GM12878 (cell line): ENCODE measurements at regions of chr17 and their contacts with region 1.

Region 1: GRCh38 chr17:75059369-75060345 is 12.6 kb downstream of the KCTD2 start:
- DNase-seq: no peak
- ATAC-seq: no peak
- H3K4me3 ChIP-seq: no peak overlapping the region
- H3K27ac ChIP-seq: no peak overlapping the region
- H3K4me1 ChIP-seq: no peaks in the 10 kb centered on the region
- H3K27me3 ChIP-seq: no peaks in the 10 kb centered on the region
- CTCF ChIP-seq: peak in 2 of 3 experiments; percentile 19 to 34; a peak in 2 of 6 replicates
- EP300 ChIP-seq: no peak
- POLR2A ChIP-seq: no peak
- RAD21 ChIP-seq: peak; percentile 38; the same call in 1 of the 2 replicates

Region 2: DNA sequence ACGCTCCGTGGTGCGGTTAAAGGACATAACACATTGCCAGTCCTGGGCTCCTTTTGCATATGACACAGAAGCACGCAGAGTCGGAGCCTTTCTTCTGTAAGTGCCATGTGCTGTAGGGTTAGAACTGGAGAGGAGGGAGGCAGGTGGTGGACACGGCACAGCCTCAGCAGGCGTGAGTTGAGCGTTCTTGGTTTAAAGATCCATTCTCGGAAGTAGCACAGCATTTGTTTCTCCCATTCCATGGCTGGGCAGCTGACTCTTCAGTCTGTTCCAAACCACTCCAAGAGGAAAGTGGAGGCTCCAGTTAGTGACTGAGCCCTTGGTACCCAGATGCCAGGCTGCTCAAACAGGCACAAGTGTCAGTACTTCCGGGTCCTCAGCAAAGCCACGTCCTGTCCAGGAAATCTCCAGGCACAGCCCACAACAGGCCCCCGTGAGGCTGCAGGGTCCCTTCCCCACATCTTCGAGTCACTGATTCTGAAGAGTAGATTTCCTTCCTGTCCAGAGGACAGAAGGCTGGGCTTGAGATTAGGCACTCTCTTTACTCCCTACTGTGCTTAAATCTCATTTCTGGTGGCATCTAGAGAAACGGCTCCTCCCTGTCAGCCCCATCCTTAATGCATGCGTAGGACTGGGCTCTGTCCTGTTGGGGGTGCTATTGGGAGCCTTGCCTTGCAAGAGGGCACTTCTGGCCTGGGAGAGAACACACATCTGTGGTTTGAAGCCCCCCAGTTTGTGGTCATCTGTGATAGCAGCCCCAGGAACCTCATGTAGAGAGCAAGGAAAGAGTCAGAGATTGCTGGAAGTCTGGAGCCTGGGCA is 243.9 kb before region 1 on chr17:
- CTCF ChIA-PET with region 1: no interaction called
- POLR2A ChIA-PET with region 1: no interaction called
- RAD21 ChIA-PET with region 1: no interaction called
- SMC1A ChIA-PET with region 1: no interaction called
- in situ Hi-C with region 1: no loop called
- intact Hi-C with region 1: no loop called
- DNase-seq: no peak
- ATAC-seq: peak; percentile 28; the same call in 1 of the 3 replicates
- H3K4me3 ChIP-seq: no peak overlapping the region
- H3K27ac ChIP-seq: no peak overlapping the region
- H3K4me1 ChIP-seq: no peaks in the 10 kb centered on the region
- H3K27me3 ChIP-seq: no peaks in the 10 kb centered on the region
- CTCF ChIP-seq: 0 out of 6 replicates have a peak, but pooled peaks of 2 of the 3 experiments have one; percentile 5 to 10
- EP300 ChIP-seq: no peak
- POLR2A ChIP-seq: no peak
- RAD21 ChIP-seq: no peak

Region 3: DNA sequence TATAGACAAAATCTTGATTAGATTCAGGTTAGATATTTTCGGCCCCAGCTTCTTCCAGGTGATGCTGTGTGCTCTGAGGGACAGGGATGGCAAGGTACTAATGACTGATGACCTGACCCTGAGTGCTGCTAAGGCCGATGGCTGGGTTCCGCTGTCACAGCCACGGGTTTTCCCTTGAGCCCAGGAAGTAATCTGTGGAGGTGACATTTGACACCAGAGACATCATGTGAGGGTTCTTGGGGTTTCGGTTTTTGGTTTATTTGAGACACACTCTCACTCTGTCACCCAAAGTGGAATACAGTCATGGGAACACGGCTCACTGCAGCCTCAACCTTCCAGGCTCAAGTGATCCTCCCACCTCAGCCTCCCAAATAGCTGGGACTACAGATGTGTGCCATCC is 114.1 kb before region 1 on chr17:
- CTCF ChIA-PET with region 1: no interaction called
- POLR2A ChIA-PET with region 1: no interaction called
- RAD21 ChIA-PET with region 1: no interaction called
- SMC1A ChIA-PET with region 1: no interaction called
- in situ Hi-C with region 1: no loop called
- intact Hi-C with region 1: no loop called
- DNase-seq: peak; percentile 48
- ATAC-seq: peak; percentile 97
- H3K4me3 ChIP-seq: peak overlapping the region; percentile 12; the same call in 1 of the 2 replicates
- H3K27ac ChIP-seq: no peak overlapping the region
- H3K4me1 ChIP-seq: peaks cover 6% of the 10 kb centered on the region; the same call in 1 of the 2 replicates
- H3K27me3 ChIP-seq: no peaks in the 10 kb centered on the region; a peak in 1 of 4 replicates
- CTCF ChIP-seq: no peak
- EP300 ChIP-seq: no peak
- POLR2A ChIP-seq: peak; percentile 52; the same call in 1 of the 2 replicates
- RAD21 ChIP-seq: no peak

Region 4: GRCh38 chr17:75012346-75013091 is 47.1 kb before region 1 on chr17 and contains the start of gene MRPL58:
- CTCF ChIA-PET with region 1: interaction called, 11 read pairs
- POLR2A ChIA-PET with region 1: interaction called, 3 read pairs
- RAD21 ChIA-PET with region 1: interaction called, 3 read pairs
- SMC1A ChIA-PET with region 1: interaction called, 4 read pairs
- in situ Hi-C with region 1: no loop called
- intact Hi-C with region 1: no loop called
- DNase-seq: peak; percentile 60
- ATAC-seq: peak; percentile 95
- H3K4me3 ChIP-seq: peak within 1 kb of the TSS; percentile 94
- H3K27ac ChIP-seq: peak within 1 kb of the TSS; percentile 67
- H3K4me1 ChIP-seq: peaks cover 8% of the 10 kb centered on the region
- H3K27me3 ChIP-seq: no peaks in the 10 kb centered on the region; a peak in 1 of 4 replicates
- CTCF ChIP-seq: peak in 2 of 3 experiments; percentile 22 to 54; a peak in 4 of 6 replicates
- EP300 ChIP-seq: no peak
- POLR2A ChIP-seq: peak; percentile 99
- RAD21 ChIP-seq: no peak
- polyA plus RNA-seq, gene MRPL58: 23.0 to 43.7 TPM

Region 5: GRCh38 chr17:75069783-75070182 is 10.1 kb after region 1 on chr17:
- CTCF ChIA-PET with region 1: interaction called, 20 read pairs
- POLR2A ChIA-PET with region 1: interaction called, 7 read pairs
- RAD21 ChIA-PET with region 1: interaction called, 5 read pairs
- SMC1A ChIA-PET with region 1: interaction called, 3 read pairs
- in situ Hi-C with region 1: no loop called
- intact Hi-C with region 1: no loop called
- DNase-seq: no peak
- ATAC-seq: peak; percentile 68
- H3K4me3 ChIP-seq: no peak overlapping the region
- H3K27ac ChIP-seq: no peak overlapping the region
- H3K4me1 ChIP-seq: peaks cover 15% of the 10 kb centered on the region
- H3K27me3 ChIP-seq: no peaks in the 10 kb centered on the region
- CTCF ChIP-seq: peak in 2 of 3 experiments; percentile 35 to 50; a peak in 4 of 6 replicates
- EP300 ChIP-seq: no peak
- POLR2A ChIP-seq: no peak
- RAD21 ChIP-seq: 0 out of 2 replicates have a peak, but pooled peaks have one; percentile 24

Region 6: GRCh38 chr17:75131280-75132017 is 71.8 kb after region 1 on chr17 and contains the start of gene NT5C:
- CTCF ChIA-PET with region 1: interaction called, 5 read pairs
- POLR2A ChIA-PET with region 1: interaction called, 5 read pairs
- RAD21 ChIA-PET with region 1: interaction called, 4 read pairs
- SMC1A ChIA-PET with region 1: interaction called, 3 read pairs
- in situ Hi-C with region 1: no loop called
- intact Hi-C with region 1: loop called (anchors 2 kb)
- DNase-seq: no peak
- ATAC-seq: peak; percentile 96
- H3K4me3 ChIP-seq: peak within 1 kb of the TSS; percentile 74
- H3K27ac ChIP-seq: peak within 1 kb of the TSS; percentile 82
- H3K4me1 ChIP-seq: peaks cover 14% of the 10 kb centered on the region
- H3K27me3 ChIP-seq: no peaks in the 10 kb centered on the region
- CTCF ChIP-seq: peak; percentile 72 to 74 (median 74); a peak in 5 of 6 replicates
- EP300 ChIP-seq: no peak; a peak in 1 of 4 replicates
- POLR2A ChIP-seq: peak; percentile 96
- RAD21 ChIP-seq: peak; percentile 34; the same call in 1 of the 2 replicates
- polyA plus RNA-seq, gene NT5C: 3.7 to 9.8 TPM

Region 7: DNA sequence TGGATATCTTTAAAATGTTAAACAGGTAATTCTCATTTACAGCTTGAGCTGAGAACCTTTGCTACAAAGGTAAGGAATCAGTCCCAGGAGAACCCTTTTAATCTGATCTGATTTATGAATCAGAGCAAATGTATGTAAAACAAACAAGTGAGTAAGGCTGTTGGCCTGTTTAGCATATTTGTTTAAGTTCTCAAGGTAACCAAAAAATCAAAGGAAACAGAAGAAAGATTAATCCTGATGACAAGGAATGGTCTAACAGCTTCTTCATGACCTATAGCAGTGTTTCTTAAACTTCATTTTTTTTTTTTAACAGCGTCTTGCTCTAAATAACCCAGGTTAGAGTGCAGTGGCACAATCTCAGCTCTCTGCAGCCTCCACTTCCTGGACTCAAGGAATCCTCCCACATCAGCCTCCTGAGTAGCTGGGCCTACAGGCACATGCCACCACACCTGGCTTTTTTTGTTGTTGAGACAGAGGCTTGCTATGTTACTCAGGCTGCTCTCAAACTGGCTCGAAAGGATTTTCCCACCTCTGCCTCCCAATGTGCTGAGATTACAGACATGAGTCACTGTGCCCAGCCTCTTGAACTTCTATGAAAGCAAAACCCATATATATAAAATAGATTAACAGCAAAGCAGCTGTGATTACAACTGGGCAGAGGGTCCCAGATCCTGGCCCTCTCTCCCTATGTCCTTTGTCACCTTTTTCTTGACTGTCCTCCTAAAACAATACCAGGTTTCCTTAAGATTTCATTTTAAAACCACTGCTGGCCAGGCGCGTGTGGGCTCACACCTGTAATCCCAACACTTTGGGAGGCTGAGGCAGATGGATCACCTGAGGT is 99.8 kb after region 1 on chr17:
- CTCF ChIA-PET with region 1: no interaction called
- POLR2A ChIA-PET with region 1: no interaction called
- RAD21 ChIA-PET with region 1: no interaction called
- SMC1A ChIA-PET with region 1: no interaction called
- in situ Hi-C with region 1: no loop called
- intact Hi-C with region 1: no loop called
- DNase-seq: no peak
- ATAC-seq: no peak
- H3K4me3 ChIP-seq: no peak overlapping the region
- H3K27ac ChIP-seq: no peak overlapping the region
- H3K4me1 ChIP-seq: peaks cover 6% of the 10 kb centered on the region
- H3K27me3 ChIP-seq: no peaks in the 10 kb centered on the region
- CTCF ChIP-seq: no peak
- EP300 ChIP-seq: no peak
- POLR2A ChIP-seq: no peak
- RAD21 ChIP-seq: no peak